Activated T-helper 1 cell treated with anti-CD3 and anti-CD28 coated beads, Interleukin-12 subunit alpha, Interleukin-12 subunit beta, Interleukin-2, Interleukin-4 antibody, amounts not matched to agents 30 ng/mL and 10 ng/mL and 1 ng/mL, durations not matched to agents 14 hours and 24 hours and 36 hours (primary cell): ENCODE measurements at regions of chr9 and their contacts with region 1.

Region 1: DNA sequence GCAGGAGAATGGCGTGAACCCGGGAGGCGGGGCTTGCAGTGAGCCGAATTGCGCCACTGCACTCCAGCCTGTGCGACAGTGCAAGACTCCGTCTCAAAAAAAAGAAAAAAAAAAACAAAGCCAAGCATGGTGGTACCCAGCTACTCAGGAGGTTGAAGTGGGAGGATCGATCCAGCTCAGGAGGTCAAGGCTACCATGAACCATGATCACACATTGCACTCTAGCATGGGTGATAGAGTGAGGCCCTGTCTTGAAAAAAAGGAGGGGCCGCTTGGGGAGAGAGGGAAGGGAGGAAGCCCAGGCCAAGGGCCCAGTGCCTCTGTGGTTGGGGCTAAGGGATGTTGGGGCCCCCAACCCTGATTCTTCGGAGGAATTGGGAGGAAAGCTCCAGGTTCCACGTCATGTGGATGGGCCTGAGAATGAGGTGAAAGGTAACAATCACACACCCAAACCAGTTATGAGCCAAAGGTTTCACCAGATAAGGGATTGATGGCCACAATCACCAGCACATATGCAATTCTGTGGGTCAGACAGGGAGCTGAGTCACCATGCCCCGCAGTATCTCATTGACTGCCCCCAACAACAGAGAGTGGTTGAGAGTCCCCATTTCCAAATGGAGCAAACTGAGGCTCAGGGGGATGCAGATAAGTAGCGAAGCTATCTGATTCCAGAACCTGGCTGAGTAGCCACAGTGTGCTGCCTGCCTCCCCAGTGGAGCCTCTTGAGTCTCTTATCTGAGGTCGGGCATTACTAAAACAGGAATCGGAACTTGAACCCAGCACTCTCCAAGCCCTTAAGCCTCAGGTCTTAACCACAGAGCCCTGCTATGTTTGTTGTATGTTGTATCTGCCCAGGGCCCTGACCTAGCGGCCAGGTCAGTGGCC is 20.5 kb downstream of the SWI5 start:
- DNase-seq: no peak
- H3K4me3 Mint-ChIP-seq: no peak overlapping the region
- H3K27ac Mint-ChIP-seq: no peak overlapping the region
- H3K4me1 Mint-ChIP-seq: peaks cover 5% of the 10 kb centered on the region
- H3K27me3 Mint-ChIP-seq: no peaks in the 10 kb centered on the region

Region 2: GRCh38 chr9:128254855-128255759 is 41.5 kb before region 1 on chr9:
- intact Hi-C with region 1: no loop called
- DNase-seq: peak; percentile 32
- H3K4me3 Mint-ChIP-seq: no peak overlapping the region
- H3K27ac Mint-ChIP-seq: no peak overlapping the region
- H3K4me1 Mint-ChIP-seq: peaks cover 5% of the 10 kb centered on the region
- H3K27me3 Mint-ChIP-seq: peaks cover 13% of the 10 kb centered on the region

Region 3: DNA sequence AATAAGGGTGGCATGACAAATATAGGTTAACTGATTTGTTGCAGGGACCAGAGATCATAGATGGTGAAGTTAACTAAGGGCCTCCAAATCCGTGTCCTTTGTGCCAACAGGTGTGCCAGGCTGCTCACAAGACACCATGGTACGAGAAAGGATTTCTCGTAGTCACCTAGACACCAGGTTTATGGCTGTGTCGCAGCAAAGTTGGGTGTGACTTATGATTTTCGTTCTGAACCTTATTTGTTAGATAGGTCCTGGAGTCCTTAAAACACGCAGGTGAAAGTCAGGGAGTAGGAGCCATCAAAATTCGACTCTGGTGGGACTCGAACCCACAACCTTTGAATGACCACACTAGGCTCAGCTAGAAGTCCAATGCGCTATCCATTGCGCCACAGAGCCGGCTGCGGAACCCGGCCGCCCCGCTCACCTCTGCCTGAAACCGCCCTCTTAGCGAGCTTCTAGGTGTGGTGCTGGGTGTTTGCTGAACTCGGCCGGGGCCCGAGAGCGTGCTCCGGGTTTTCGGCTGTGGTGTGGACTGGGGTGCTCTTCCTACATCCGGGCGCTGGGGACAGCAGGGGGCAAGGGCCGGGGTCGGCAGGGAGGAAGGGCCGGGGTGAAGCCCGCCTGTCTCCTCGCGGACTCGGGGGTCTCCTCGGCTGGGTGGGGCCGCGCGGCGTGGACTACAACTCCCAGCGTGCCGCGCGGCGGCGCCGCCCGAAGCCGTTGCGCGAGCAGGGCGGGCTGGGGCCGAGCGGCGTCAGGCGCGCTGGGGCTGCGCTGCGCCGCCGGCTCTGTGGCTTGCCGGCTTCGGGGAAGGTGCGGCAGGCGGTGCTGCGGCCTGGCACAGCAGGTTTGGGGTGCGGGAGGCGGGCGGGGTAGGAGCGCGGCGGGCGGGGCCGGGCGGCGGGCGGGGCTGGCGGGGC is 43.5 kb after region 1 on chr9 and contains the start of gene SLC27A4:
- intact Hi-C with region 1: loop called (anchors 1 kb)
- DNase-seq: peak; percentile 82
- H3K4me3 Mint-ChIP-seq: peak within 1 kb of the TSS; percentile 94
- H3K27ac Mint-ChIP-seq: peak within 1 kb of the TSS; percentile 88
- H3K4me1 Mint-ChIP-seq: peaks cover 6% of the 10 kb centered on the region
- H3K27me3 Mint-ChIP-seq: no peaks in the 10 kb centered on the region
- total RNA-seq, gene SLC27A4: 41.8 and 43.2 TPM in 2 replicates

Region 4: DNA sequence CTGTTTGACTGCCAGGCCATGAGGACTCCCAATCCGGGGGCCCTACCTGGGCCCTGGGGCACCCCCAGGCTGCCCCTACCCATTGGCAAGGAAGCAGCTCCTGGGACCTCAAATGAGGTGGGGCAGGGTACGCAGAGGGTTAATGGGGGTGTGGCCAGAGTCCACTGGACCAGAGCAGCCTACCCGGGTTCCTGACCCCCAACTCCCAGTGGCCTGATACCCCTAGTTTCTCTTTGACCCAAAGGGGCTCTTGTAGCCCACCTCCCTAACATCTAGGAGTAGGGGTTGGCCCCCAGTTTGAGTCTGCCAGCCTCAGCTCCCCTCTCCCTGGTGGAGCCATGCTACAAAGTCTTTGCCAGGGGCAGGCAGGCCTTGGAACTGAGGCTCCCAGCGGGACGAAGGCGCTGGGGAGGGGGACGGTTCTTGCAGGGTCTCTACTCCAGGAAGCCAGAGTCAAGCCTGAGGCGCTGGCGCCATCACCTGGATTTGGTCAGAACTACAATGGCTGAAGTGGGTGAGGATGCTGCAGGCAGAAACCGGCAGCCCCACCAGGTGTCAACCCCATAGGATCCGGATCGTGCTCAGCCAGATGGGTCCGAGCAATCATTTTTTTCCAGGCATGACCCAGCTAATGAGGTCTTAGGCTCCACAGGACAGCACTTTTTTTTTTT is 115.7 kb after region 1 on chr9:
- intact Hi-C with region 1: loop called (anchors 5 kb)
- DNase-seq: peak; percentile 22
- H3K4me3 Mint-ChIP-seq: no peak overlapping the region
- H3K27ac Mint-ChIP-seq: no peak overlapping the region
- H3K4me1 Mint-ChIP-seq: peaks cover 5% of the 10 kb centered on the region
- H3K27me3 Mint-ChIP-seq: peaks cover 44% of the 10 kb centered on the region